Caco-2 (cell line): ENCODE measurements at regions of chr22 and their contacts with region 1.

Region 1: GRCh38 chr22:33018232-33018864 is 39.8 kb downstream of the SYN3 start:
- DNase-seq: peak; percentile 60 to 80
- H3K4me3 ChIP-seq: no peak overlapping the region
- H3K4me3 Mint-ChIP-seq: no peak overlapping the region
- H3K27ac Mint-ChIP-seq: no peak overlapping the region
- H3K4me1 ChIP-seq: no peaks in the 10 kb centered on the region
- H3K4me1 Mint-ChIP-seq: no peaks in the 10 kb centered on the region
- H3K27me3 ChIP-seq: no peaks in the 10 kb centered on the region; the same call in 1 of the 2 replicates
- H3K27me3 Mint-ChIP-seq: peaks cover 4% of the 10 kb centered on the region
- CTCF ChIP-seq: peak; percentile 88 to 92

Region 2: GRCh38 chr22:33049119-33049729 is 30.9 kb after region 1 on chr22:
- CTCF ChIA-PET with region 1: interaction called, 23 read pairs
- POLR2A ChIA-PET with region 1: no interaction called
- intact Hi-C with region 1: loop called (anchors 1 kb)
- DNase-seq: peak; percentile 66 to 72
- H3K4me3 ChIP-seq: no peak overlapping the region
- H3K4me3 Mint-ChIP-seq: no peak overlapping the region
- H3K27ac Mint-ChIP-seq: no peak overlapping the region
- H3K4me1 ChIP-seq: no peaks in the 10 kb centered on the region
- H3K4me1 Mint-ChIP-seq: no peaks in the 10 kb centered on the region
- H3K27me3 ChIP-seq: no peaks in the 10 kb centered on the region
- H3K27me3 Mint-ChIP-seq: peaks cover 18% of the 10 kb centered on the region
- CTCF ChIP-seq: peak; percentile 62 to 93

Region 3: GRCh38 chr22:33126881-33127280 is 108.5 kb after region 1 on chr22:
- CTCF ChIA-PET with region 1: interaction called, 18 read pairs
- POLR2A ChIA-PET with region 1: no interaction called
- intact Hi-C with region 1: loop called (anchors 1 kb)
- DNase-seq: peak in 1 of 2 experiments; percentile 12
- H3K4me3 ChIP-seq: no peak overlapping the region
- H3K4me3 Mint-ChIP-seq: no peak overlapping the region
- H3K27ac Mint-ChIP-seq: no peak overlapping the region
- H3K4me1 ChIP-seq: no peaks in the 10 kb centered on the region
- H3K4me1 Mint-ChIP-seq: no peaks in the 10 kb centered on the region
- H3K27me3 ChIP-seq: no peaks in the 10 kb centered on the region
- H3K27me3 Mint-ChIP-seq: peaks cover 16% of the 10 kb centered on the region
- CTCF ChIP-seq: peak in 1 of 2 experiments; percentile 18